Activated CD4-positive, alpha-beta memory T cell treated with anti-CD3 and anti-CD28 coated beads for 36 hours (primary cell): ENCODE measurements at regions of chr5 and their contacts with region 1.

Region 1: DNA sequence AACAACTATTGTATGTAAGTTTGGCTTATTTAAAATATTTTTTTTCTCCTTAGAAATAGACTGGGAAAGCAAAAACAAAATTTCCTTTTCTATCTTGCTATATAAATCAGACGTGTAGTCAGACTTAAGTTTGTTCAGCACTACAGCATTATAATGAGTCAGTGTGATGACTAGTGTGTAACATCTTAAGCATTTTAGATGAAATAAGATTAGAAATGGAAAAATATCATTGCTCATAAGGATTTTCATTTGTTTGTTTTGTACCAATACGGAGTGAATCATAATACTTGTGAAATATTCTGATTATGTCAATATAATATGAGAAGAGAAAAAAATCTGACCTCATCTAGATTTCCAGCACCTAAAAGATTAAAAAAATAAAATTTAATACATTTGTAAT is 64.7 kb upstream of the RICTOR start:
- DNase-seq: no peak
- H3K4me3 Mint-ChIP-seq: no peak overlapping the region
- H3K27ac Mint-ChIP-seq: no peak overlapping the region
- H3K4me1 Mint-ChIP-seq: peaks cover 36% of the 10 kb centered on the region
- H3K27me3 Mint-ChIP-seq: no peaks in the 10 kb centered on the region

Region 2: GRCh38 chr5:38845526-38846378 is 293.1 kb before region 1 on chr5 and contains the start of gene OSMR:
- CTCF ChIA-PET with region 1: no interaction called
- POLR2A ChIA-PET with region 1: no interaction called
- intact Hi-C with region 1: no loop called
- DNase-seq: peak; percentile 58
- H3K4me3 Mint-ChIP-seq: peak within 1 kb of the TSS; percentile 62
- H3K27ac Mint-ChIP-seq: no peak within 1 kb of the TSS
- H3K4me1 Mint-ChIP-seq: peaks cover 3% of the 10 kb centered on the region
- H3K27me3 Mint-ChIP-seq: peaks cover 58% of the 10 kb centered on the region
- total RNA-seq, gene OSMR: 0.10 TPM in 1 of 2 experiments, not detected in the other

Region 3: DNA sequence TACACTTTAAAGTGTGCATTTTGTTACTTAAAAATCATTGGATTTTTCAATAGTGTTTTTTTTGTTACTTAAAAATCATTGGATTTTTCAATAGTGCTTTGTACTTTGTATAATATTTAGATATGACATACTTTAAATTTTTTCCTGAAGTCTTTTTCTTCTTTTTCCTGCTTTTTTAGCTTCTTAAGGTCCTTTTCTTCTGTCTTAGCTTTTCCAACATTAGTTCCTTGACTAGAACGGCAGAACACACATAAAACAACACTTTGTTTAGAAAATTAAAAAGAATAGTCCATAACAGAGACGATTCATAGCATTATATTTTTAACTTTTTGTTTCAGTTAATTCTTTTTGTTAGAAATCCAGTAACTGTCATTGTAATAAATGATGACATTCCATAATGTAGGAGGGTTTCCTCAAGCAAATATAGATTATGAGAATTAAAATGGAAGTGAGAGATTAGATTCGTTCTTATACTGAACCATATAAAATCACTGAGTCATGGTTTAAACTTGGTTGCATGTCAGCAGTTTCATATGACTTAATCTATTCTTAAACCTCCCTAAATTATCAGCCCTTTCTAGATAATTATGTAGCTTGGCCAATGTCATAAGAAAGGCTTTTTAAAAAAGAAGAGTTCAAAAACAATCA is 19.4 kb before region 1 on chr5:
- CTCF ChIA-PET with region 1: interaction called, 4 read pairs
- POLR2A ChIA-PET with region 1: no interaction called
- intact Hi-C with region 1: loop called (anchors 2 kb)
- DNase-seq: no peak
- H3K4me3 Mint-ChIP-seq: no peak overlapping the region
- H3K27ac Mint-ChIP-seq: peak overlapping the region; percentile 62
- H3K4me1 Mint-ChIP-seq: peaks cover 58% of the 10 kb centered on the region
- H3K27me3 Mint-ChIP-seq: no peaks in the 10 kb centered on the region

Region 4: DNA sequence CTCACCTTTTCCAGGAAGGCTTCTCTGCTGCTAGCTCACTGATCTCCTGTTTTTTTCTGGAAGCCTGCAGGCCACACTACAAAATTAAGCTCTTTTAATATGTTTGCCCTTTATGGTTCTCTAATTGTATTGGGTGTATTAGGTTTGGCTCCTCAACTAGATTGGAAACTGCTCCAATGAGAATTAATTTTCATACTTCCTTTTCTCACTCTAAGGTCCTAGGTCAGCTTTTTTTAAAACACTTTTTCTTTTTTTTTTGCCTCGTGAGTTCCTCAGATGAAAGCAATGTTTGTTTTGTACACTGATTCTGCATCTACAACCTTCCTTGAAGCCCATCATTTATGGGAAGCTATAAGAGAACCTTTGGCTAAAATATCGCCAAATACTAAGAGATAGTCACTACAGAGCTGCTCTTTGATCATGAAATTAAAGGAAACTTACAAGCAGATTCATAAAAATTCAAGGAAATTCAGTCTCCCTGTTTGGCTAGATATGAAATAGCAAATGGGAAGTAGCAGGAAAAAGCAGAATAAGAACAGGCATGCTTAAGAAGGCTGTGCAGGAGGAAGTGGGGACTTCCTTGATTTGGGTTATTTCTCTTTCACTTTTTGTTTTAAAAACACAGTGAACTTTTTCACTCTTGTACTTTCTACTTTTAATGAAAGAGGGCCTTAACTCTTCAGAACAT is 135.7 kb after region 1 on chr5:
- CTCF ChIA-PET with region 1: no interaction called
- POLR2A ChIA-PET with region 1: no interaction called
- intact Hi-C with region 1: no loop called
- DNase-seq: no peak
- H3K4me3 Mint-ChIP-seq: peak overlapping the region; percentile 74
- H3K27ac Mint-ChIP-seq: peak overlapping the region; percentile 95
- H3K4me1 Mint-ChIP-seq: peaks cover 53% of the 10 kb centered on the region
- H3K27me3 Mint-ChIP-seq: no peaks in the 10 kb centered on the region